ENCODE measurements at regions of chr2 and their contacts with region 1.

Region 1: DNA sequence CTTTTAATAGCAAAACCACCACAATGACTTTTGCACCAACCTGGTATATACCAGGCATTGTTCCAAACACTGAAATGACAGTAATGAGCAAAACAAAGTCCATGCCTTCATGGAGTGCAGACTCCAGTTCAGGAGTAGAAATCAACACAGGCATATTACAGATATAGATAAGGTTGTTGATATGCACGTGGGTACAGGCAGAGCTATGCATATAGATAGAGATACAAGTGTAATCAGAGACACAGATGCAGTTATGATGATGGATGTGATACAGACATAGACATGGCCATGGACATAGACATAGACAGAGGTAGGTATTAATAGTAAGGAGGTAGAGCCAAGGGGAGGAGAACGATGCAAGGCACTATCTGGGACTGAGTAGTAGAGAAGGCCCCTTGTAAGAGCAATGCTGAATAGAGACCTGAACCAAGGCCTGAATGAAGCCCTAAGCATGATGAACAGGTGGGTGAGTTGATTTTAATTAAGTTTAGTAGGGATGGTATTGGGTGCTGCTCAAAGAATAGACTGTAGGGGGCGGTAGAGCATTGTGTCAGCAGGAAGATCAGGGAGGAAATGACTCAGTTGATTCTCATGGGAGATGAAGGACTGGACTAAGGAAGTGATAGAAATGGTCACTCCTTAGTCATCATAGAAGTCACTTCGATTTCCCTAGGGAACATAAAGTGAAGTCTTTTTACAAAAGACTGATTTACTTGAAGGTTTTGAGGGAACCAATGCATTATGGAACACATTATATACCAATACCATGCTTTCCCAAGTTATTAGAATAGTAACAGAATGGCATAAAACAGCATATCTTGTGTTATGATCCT is 39.4 kb downstream of the CMPK2 start:
- DNase-seq: peak; percentile 93
- ATAC-seq: peak; percentile 90
- H3K4me3 ChIP-seq: no peak overlapping the region
- H3K27ac ChIP-seq: peak overlapping the region; percentile 94
- H3K4me1 ChIP-seq: peaks cover 17% of the 10 kb centered on the region
- H3K27me3 ChIP-seq: peaks cover 14% of the 10 kb centered on the region; the same call in 1 of the 2 replicates
- CTCF ChIP-seq: peak; percentile 94

Region 2: DNA sequence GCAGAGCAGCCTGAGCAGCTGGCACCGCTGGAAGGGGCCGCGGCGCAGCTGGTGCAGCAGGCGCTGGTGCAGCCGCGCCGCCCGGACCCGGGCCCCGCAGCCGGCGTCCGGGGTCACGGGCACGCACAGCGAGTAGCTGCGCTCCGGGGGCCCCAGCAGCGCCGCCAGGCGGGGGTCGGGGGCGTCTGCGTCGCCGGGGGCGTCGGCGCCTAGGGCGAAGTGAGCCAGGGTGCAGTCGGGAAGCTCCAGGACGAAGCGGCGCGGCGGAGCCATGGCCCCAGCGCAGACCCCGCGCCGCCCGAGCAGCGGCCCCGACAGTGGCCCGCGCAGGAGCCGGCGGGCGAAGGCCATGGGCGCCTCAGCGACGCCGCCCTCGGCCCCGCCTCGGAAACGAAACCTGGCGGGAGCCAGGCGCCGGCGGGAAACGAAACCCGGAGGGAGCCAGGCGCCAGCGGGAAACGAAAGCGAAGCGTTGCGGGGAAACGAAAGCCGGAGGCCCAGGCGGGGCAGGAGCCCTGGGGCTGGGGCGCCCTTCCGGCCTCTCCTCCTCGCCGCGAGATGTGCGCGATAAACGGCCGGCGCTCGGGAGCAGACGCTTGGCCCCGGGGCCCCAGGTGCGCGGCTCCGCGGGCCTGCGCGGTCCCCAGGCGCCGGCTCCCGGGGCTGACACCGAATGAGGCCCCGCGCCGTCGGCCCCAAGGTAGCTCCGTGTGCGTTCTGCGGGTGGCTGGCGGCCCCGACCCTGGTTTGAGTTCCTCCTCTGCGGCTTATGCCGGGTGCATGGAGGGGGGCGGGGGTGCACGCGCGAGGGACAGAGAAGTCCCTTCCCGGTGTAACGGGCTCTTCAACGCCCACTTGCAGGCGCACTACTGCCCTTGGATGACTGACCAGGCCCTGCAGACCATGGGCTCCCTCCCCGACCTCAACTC is 39.3 kb after region 1 on chr2 and contains the start of gene CMPK2:
- CTCF ChIA-PET with region 1: interaction called, 4 read pairs
- POLR2A ChIA-PET with region 1: interaction called, 7 read pairs
- intact Hi-C with region 1: loop called (anchors 1 kb)
- DNase-seq: peak; percentile 67
- ATAC-seq: peak; percentile 58
- H3K4me3 ChIP-seq: peak within 1 kb of the TSS; percentile 76
- H3K27ac ChIP-seq: 0 out of 2 replicates have a peak within 1 kb of the TSS, but pooled peaks have one; percentile 12
- H3K4me1 ChIP-seq: peaks cover 13% of the 10 kb centered on the region
- H3K27me3 ChIP-seq: 0 out of 2 replicates have a peak, but pooled peaks cover 3% of the 10 kb centered on the region
- CTCF ChIP-seq: no peak; the same call in 1 of the 2 replicates
- total RNA-seq, gene CMPK2: 5.0 and 6.5 TPM in 2 replicates

Region 3: GRCh38 chr2:7044261-7045250 is 218.3 kb after region 1 on chr2:
- CTCF ChIA-PET with region 1: no interaction called
- POLR2A ChIA-PET with region 1: no interaction called
- intact Hi-C with region 1: loop called (anchors 1 kb)
- DNase-seq: peak; percentile 76
- ATAC-seq: peak; percentile 82
- H3K4me3 ChIP-seq: no peak overlapping the region
- H3K27ac ChIP-seq: no peak overlapping the region
- H3K4me1 ChIP-seq: 0 out of 2 replicates have a peak, but pooled peaks cover 4% of the 10 kb centered on the region
- H3K27me3 ChIP-seq: no peaks in the 10 kb centered on the region
- CTCF ChIP-seq: peak; percentile 94

Region 4: DNA sequence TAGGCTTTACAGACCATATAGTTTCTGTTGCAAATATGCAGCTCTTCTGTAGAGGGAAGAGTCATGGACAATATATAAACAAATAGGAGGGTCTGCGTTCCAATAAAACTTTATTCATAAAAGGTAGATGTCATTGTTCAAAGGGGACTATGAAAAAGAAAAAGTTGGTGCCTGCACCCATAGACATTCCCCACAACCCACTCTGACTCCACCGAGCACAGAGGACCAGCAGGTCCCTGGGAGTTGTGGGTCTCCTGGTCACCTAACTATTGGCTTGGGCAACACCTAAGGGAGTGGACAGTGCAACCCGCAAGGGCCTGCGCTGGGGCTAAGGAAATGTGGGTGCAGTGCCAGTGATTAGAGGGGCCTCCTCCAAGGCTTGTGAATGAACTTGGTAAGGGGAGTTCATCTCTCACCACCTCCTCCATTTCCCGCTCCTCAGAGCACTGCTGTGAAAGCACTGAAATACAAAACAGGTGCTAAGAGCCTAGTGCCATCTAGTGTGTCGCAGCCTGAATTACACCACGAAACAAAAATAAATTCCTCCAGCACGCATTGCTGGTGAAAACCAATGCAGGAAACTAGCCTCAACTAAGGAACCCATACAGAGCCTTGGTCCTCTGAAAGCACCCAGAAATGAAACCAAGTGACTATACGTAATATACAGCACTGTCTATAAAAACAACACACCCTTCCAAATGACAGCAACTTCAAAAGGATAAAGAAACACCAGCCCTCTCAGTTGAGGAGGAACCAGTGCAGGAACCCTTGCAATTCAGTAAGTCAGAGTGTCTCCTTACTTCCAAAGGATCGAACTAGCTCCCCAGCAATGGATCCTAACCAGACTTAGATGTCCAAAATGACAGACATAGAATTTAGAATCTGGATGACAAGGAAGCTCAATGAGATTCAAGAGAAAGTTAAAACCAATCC is 257.5 kb after region 1 on chr2:
- CTCF ChIA-PET with region 1: no interaction called
- POLR2A ChIA-PET with region 1: no interaction called
- intact Hi-C with region 1: loop called (anchors 1 kb)
- DNase-seq: peak; percentile 77
- ATAC-seq: peak; percentile 74
- H3K4me3 ChIP-seq: no peak overlapping the region
- H3K27ac ChIP-seq: no peak overlapping the region
- H3K4me1 ChIP-seq: no peaks in the 10 kb centered on the region; the same call in 1 of the 2 replicates
- H3K27me3 ChIP-seq: 0 out of 2 replicates have a peak, but pooled peaks cover 6% of the 10 kb centered on the region
- CTCF ChIP-seq: peak; percentile 85

Measured in PC-3 (cell line).